Activated CD4-positive, alpha-beta memory T cell treated with anti-CD3 and anti-CD28 coated beads, Interleukin-2, amount 10 ng/mL, durations not matched to agents 7 days and 5 days (primary cell): ENCODE measurements at regions of chr10 and their contacts with region 1.

Region 1: DNA sequence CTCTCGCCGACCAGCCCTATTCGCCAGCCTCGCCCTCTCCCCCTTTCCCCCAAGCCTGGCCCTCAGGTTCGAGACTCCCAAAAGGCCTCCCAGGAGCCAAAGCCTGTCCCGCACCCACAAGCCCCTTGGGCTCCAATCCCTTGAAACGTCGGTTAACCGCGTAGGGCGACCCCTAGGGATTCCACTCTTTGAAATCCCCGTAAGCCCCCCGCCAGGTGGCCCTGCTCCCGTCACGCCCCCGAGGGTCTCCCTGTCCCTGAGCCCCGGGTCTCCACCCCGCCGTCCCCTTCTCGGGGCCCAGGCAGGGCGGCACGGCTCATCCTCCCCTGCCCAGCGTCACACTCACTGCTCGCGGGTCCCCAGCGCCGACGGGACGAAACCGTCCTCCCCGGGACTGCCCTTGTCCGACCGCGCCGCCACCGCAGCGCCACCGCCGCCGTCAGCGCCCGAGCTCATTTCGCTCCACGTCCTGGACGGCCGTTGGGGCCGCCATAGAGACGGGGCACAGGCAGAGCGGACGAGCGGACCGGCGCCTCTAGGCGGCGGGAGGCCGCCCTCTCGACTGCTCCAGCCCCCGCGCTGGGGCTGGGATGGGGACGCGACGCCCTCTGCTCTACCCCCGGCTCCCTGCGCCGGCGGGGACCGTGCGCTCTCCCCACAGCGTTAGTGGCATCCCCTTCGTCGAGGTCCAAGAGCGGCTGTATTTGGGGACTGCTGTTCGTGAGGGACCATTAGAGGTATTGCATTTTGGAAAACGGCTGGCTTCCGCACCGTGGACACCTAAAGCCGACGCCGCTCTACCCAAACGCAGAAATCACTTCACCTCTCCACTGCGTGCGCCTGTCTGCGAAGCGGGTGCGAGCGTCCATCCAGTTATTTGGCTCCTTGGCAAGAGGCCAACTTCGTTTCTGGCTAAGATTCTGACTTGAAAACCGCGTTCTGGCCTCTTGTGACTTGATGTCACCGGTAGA is at the start of gene EEF1AKMT2:
- DNase-seq: peak; percentile 86
- H3K4me3 Mint-ChIP-seq: peak within 1 kb of the TSS; percentile 92
- H3K27ac Mint-ChIP-seq: peak within 1 kb of the TSS; percentile 90
- H3K4me1 Mint-ChIP-seq: peaks cover 24% of the 10 kb centered on the region
- H3K27me3 Mint-ChIP-seq: peaks cover 7% of the 10 kb centered on the region
- total RNA-seq, gene EEF1AKMT2: 32.3 to 32.5 TPM

Region 2: GRCh38 chr10:124748166-124748565 is 43.5 kb before region 1 on chr10:
- CTCF ChIA-PET with region 1: interaction called, 4 read pairs
- POLR2A ChIA-PET with region 1: interaction called, 16 read pairs
- DNase-seq: no peak
- H3K4me3 Mint-ChIP-seq: no peak overlapping the region
- H3K27ac Mint-ChIP-seq: no peak overlapping the region
- H3K4me1 Mint-ChIP-seq: peaks cover 30% of the 10 kb centered on the region
- H3K27me3 Mint-ChIP-seq: no peaks in the 10 kb centered on the region

Region 3: GRCh38 chr10:124802313-124802675 is 10.6 kb after region 1 on chr10:
- CTCF ChIA-PET with region 1: interaction called, 5 read pairs
- POLR2A ChIA-PET with region 1: interaction called, 44 read pairs
- DNase-seq: no peak
- H3K4me3 Mint-ChIP-seq: peak overlapping the region; percentile 91
- H3K27ac Mint-ChIP-seq: peak overlapping the region; percentile 76
- H3K4me1 Mint-ChIP-seq: peaks cover 18% of the 10 kb centered on the region
- H3K27me3 Mint-ChIP-seq: peaks cover 7% of the 10 kb centered on the region

Region 4: DNA sequence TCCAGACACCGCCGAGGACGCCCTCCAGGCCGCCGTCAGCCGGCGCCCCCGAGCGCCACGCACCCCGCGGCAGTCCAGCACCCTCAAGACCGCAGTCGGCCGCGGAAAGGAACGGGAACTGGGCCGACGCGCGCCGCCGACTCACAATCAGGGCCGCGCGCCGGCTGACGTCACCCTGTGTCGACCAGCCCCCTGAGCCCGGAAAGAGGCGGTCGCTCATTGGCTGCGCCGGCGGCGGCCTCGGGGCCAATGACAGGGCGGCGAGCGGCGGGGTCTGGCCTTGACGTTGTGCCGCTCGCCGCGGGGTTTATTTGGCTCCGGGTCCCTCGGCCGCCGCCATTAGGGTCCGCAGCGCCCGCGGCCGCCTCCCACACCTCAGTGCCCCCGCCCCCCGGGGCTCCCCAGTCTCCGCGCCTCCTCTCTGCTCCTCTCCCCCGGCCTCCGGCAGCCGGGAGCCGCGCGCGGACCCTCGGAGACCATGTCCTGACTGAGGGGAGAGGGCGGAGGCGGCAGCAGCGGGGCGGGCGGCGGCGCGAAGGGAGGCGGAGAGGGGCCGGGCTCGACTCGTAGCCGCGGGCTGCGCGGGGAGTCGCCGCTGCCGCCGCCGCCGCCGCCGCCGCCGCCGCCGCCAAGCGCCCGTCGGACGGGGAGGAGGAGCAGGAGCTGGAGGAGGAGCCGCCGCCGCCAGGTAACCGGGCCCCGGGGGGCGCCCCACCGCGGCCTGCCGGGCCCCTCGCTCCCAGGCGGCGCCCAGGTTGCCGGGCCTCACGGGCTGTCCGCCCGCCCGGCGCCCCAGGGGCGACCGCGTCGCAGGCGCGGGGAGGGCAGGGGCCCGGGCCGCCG is 125.1 kb after region 1 on chr10:
- CTCF ChIA-PET with region 1: no interaction called
- POLR2A ChIA-PET with region 1: interaction called, 13 read pairs
- DNase-seq: peak; percentile 97
- H3K4me3 Mint-ChIP-seq: peak overlapping the region; percentile 87
- H3K27ac Mint-ChIP-seq: peak overlapping the region; percentile 80
- H3K4me1 Mint-ChIP-seq: peaks cover 31% of the 10 kb centered on the region
- H3K27me3 Mint-ChIP-seq: peaks cover 8% of the 10 kb centered on the region